AG04449 (cell line): ENCODE measurements at regions of chr6 and their contacts with region 1.

Region 1: DNA sequence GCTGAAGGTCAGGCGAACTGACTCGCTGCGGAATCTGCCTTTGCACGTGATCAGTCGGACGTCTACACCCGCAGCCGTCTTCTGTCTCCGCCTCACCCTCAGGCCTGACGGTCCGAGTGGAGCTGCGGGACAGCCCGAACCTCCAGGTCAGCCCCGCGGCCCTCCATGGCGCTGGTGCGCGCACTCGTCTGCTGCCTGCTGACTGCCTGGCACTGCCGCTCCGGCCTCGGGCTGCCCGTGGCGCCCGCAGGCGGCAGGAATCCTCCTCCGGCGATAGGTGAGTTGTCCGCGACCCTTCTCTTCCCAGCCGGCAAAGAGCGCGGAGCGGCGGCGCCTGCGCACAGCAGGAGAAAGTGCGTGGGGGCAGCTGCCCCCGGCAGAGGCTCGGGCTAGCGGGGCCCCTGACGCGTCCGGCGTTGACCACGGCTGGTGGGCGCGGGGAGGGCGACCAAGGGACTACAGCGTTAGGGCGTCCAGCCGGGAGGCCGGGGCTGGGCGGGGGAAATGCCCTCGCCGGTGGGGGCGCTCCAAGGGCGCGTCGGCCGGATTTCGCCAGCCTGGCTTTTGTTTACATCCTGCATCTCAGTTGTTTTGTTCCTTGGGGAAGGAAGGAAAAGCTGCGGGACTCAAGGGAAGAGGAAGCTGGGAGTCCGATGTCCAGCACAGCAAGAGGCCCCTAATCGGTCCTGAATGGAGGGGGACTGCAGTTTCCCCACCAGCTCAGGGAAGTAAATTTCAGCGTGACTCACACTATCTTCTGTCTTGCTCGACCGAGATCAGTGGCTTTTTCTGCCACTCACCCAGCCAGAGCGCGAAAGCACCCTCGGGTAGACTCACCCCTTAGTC is at the start of gene SMPDL3A:
- DNase-seq: no peak
- H3K4me3 ChIP-seq: peak within 1 kb of the TSS; percentile 77
- CTCF ChIP-seq: peak; percentile 62

Region 2: DNA sequence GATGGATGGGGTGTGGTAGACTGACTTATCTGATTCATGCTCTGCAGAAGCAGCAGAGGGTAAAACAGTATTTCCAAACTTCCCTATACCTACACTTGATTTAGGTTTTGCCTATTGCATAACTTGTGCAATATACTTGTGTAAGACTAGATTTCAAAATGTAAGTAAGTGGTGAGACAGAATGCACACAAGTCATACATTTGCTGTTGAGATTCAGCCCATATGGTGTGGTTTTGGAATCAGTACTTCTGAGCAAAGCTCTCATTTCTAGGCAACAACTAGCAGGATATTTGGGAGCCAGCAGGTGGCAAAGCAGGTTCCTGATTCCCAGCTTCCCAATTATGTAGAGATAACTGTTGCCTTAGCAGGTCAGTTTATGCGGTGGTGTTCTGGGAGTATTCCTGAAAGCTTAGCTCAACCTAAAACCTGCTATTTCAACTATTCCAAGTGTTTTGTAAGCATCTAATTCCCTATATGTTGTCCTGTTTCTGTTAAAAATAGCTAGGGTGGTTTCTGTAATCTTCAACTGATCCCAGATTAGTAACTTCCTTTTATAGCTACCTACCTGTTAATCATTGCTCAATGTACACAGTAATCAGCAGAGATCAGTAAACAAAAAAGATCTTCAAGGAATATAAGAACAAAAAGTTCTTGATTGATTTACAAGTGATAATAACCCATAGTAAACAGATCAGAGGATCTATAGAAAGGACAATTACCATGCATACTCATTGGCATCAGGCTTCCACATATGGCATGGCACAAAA is 18.4 kb before region 1 on chr6:
- CTCF ChIA-PET with region 1: interaction called, 10 read pairs
- POLR2A ChIA-PET with region 1: no interaction called
- DNase-seq: no peak
- H3K4me3 ChIP-seq: no peak overlapping the region
- CTCF ChIP-seq: no peak

Region 3: GRCh38 chr6:122778985-122779661 is 10.3 kb before region 1 on chr6:
- CTCF ChIA-PET with region 1: interaction called, 10 read pairs
- POLR2A ChIA-PET with region 1: no interaction called
- DNase-seq: no peak
- H3K4me3 ChIP-seq: no peak overlapping the region
- CTCF ChIP-seq: no peak

Region 4: DNA sequence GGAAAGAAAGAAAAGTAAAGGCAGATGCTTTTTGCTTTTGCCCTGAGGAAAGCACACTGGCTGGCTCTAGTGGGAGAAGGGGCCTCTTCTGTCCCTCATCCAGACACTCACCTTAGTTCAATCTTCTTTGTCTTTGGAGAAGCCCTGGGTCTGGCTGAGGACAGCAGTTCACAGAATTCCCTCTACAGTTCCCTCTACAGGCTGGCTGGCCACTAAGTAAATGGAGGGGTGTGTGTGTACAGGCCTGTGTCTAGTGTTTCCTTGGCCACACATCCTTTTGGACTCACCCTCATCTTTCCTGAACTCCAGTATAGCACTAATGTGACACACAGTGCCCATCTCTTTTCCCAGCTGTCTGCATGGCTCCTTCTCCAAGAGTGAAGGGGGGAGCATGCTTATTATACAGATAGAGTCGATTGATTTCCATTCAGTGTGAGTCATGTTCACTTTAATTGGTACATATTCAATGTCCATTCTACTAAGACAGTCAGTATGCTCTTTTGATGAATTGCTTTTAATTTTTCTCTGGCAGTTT is 180.7 kb after region 1 on chr6:
- CTCF ChIA-PET with region 1: no interaction called
- POLR2A ChIA-PET with region 1: no interaction called
- DNase-seq: no peak
- H3K4me3 ChIP-seq: no peak overlapping the region
- CTCF ChIP-seq: no peak

Region 5: DNA sequence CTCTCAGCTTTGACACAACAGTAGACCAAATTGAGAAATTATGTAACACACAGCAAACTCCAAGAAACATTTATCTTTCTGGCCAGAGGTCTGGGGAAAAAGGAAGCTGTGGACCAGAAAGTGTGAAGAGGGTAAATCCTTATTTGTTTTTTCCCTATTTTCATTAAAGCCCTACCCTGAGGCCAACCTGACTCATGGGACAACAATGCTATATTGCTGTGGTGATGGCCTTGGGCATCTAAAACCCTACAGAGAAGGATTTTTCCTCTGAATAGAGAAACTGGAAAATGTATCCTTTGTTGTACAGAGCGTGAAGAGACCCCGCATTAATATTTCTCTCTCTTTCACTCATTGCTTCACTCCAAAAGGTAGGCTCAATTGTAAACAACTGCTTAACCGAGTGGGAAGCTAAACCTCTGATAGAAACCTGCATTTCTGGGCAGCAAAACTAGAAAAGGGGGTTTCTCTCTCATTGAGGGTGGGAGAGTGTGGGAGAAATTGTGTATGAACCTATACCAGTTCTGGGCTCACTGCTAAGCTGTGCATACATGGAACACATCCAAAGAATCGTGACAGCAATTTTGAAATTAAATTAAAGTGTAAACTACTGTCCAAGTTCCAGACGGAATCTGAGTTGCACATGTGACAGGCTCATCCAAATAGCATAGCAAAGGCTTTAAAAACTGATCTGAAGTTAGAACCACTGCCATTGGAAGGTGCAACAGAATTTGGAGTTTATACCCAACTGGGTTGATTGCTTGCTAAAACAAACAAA is 382.1 kb after region 1 on chr6:
- CTCF ChIA-PET with region 1: no interaction called
- POLR2A ChIA-PET with region 1: no interaction called
- DNase-seq: no peak
- H3K4me3 ChIP-seq: no peak overlapping the region
- CTCF ChIP-seq: no peak